ENCODE measurements at regions of chr19 and their contacts with region 1.

Region 1: GRCh38 chr19:29268721-29269393 is 55.9 kb upstream of the UQCRFS1 start:
- DNase-seq: peak in 1 of 2 donors; percentile 70
- H3K4me3 ChIP-seq: no peak overlapping the region
- H3K27ac ChIP-seq: no peak overlapping the region
- H3K4me1 ChIP-seq: no peaks in the 10 kb centered on the region
- H3K27me3 ChIP-seq: no peaks in the 10 kb centered on the region
- CTCF ChIP-seq: no peak
- POLR2A ChIP-seq: no peak

Region 2: DNA sequence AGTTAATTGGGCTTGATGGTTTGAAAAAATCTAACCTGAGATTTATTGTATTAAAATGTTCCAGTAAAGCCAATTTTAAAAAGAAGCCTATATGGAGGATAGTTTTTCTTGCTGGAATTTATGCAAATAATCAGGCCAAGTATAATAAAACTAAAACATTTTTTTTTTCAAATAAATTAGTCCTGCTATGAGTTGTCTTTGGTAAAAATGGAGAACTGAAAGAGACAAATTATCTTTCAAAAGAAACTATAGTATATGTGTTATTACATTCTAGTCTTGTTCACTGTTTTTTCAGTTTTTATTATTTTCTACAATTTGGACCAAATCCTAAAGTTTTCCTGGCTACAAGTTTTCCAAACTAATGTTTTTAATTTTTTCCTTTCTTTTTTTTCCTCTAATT is 524.8 kb before region 1 on chr19:
- intact Hi-C with region 1: loop called (anchors 5 kb)
- DNase-seq: no peak
- H3K4me3 ChIP-seq: no peak overlapping the region
- H3K27ac ChIP-seq: no peak overlapping the region
- H3K4me1 ChIP-seq: no peaks in the 10 kb centered on the region
- H3K27me3 ChIP-seq: no peaks in the 10 kb centered on the region
- CTCF ChIP-seq: no peak
- POLR2A ChIP-seq: no peak